Activated CD8-positive, alpha-beta T cell treated with anti-CD3 and anti-CD28 coated beads, Interleukin-2, amount 10 ng/mL, durations not matched to agents 7 days and 5 days (primary cell): ENCODE measurements at regions of chr20 and their contacts with region 1.

Region 1: GRCh38 chr20:51512645-51513044 is 29.9 kb downstream of the NFATC2 start:
- DNase-seq: peak; percentile 44
- ATAC-seq: peak; percentile 87
- H3K4me3 Mint-ChIP-seq: peak overlapping the region; percentile 50
- H3K27ac Mint-ChIP-seq: peak overlapping the region; percentile 85
- H3K4me1 Mint-ChIP-seq: peaks cover 77% of the 10 kb centered on the region
- H3K27me3 Mint-ChIP-seq: no peaks in the 10 kb centered on the region

Region 2: DNA sequence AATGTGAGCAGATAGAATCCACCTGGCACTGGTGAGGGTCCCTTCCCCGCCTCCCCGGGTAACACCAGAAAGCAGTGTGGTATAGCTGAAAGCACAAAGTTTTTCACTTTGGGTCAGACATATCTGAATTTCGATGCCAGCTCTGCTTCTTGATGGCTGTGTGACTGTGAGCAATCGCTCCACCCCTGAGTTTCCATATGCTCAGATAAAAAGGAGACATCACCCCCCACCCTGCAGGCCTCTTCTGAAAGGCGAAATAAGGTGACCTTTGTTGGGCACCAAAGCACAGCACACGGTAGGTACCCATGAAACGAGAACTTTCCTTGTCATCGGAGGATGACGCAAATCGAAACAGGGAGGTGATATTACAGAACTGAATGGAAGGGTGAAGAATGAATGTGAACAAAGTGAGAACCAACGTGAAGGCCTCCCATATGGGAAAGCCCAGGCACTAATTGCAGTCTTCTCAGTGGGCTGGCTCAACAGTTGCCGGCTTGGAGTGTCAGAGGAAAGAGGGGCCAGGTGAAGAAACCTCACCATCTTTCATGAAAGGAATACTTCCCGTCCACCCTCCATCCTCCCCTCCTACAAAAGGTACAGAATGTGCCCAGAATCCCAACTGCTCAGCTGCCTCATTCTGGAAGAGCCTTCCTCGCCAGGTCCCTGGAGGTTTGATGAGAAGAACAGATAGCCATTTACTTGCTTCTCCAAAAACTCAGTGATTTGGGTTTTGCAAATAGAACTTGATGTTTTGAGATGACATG is 32.0 kb before region 1 on chr20:
- CTCF ChIA-PET with region 1: no interaction called
- POLR2A ChIA-PET with region 1: no interaction called
- DNase-seq: peak; percentile 48
- ATAC-seq: peak; percentile 59
- H3K4me3 Mint-ChIP-seq: peak overlapping the region; percentile 53
- H3K27ac Mint-ChIP-seq: peak overlapping the region; percentile 92
- H3K4me1 Mint-ChIP-seq: peaks cover 92% of the 10 kb centered on the region
- H3K27me3 Mint-ChIP-seq: no peaks in the 10 kb centered on the region

Region 3: GRCh38 chr20:51500311-51500710 is 12.3 kb before region 1 on chr20:
- CTCF ChIA-PET with region 1: interaction called, 7 read pairs
- POLR2A ChIA-PET with region 1: interaction called, 10 read pairs
- DNase-seq: peak; percentile 81
- ATAC-seq: peak; percentile 89
- H3K4me3 Mint-ChIP-seq: no peak overlapping the region
- H3K27ac Mint-ChIP-seq: peak overlapping the region; percentile 73
- H3K4me1 Mint-ChIP-seq: peaks cover 88% of the 10 kb centered on the region
- H3K27me3 Mint-ChIP-seq: no peaks in the 10 kb centered on the region